Activated naive CD4-positive, alpha-beta T cell treated with anti-CD3 and anti-CD28 coated beads for 36 hours (primary cell): ENCODE measurements at regions of chr5 and their contacts with region 1.

Region 1: DNA sequence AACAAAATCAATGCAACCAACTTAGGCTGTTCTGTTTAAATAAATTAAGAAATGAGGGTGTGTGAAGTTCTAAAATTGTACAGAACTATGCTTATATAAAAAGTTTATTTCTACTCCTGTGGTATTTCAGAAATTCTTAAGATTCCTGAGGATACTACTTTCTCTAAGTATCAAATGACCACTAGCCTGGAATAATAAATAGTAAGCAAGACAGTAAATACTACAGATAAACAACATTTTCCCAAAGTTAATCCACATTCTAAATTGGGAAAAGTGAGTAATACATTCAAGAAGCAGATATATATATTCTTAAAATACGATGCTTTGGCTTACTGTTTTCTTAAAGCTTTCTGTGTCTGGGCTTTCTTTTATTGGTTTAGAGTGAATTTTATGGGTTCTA is 29.5 kb downstream of the CCNH start:
- DNase-seq: no peak
- H3K4me3 Mint-ChIP-seq: no peak overlapping the region
- H3K27ac Mint-ChIP-seq: no peak overlapping the region
- H3K4me1 Mint-ChIP-seq: no peaks in the 10 kb centered on the region
- H3K27me3 Mint-ChIP-seq: no peaks in the 10 kb centered on the region

Region 2: DNA sequence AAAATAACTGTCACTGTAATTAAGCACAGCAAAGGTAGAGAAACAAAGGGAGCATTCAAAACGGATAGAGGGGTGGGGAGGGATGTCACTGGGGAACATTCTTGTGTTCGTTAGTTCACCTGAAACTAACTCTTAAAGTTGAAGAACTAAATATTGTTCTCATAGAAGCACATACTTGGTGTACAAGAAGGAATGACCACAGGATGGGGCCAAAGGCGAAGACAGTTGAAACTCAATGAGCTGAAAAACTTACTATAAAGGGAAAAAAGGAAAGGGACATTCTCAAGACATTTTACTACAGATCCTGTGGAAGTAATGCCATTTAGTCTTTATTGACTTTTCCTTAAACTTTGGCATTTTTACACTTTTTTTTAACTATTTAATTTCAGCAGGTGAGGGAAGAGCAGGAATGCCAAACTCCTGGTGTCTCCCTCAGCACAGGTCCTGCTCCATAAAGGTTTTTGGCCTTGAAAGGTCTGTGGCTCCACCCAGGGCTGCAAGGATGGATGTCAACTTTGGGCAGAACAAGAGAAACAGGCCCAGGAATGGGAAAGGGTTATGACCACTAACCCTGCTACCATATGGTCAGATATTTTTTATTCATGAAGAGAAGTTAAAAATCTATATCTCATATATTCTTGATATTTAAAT is 313.1 kb before region 1 on chr5:
- CTCF ChIA-PET with region 1: no interaction called
- intact Hi-C with region 1: loop called (anchors 5 kb)
- DNase-seq: peak; percentile 10
- H3K4me3 Mint-ChIP-seq: no peak overlapping the region
- H3K27ac Mint-ChIP-seq: no peak overlapping the region
- H3K4me1 Mint-ChIP-seq: peaks cover 14% of the 10 kb centered on the region
- H3K27me3 Mint-ChIP-seq: no peaks in the 10 kb centered on the region

Region 3: GRCh38 chr5:87327998-87328397 is 55.2 kb before region 1 on chr5:
- CTCF ChIA-PET with region 1: no interaction called
- intact Hi-C with region 1: no loop called
- DNase-seq: no peak
- H3K4me3 Mint-ChIP-seq: no peak overlapping the region
- H3K27ac Mint-ChIP-seq: no peak overlapping the region
- H3K4me1 Mint-ChIP-seq: peaks cover 57% of the 10 kb centered on the region
- H3K27me3 Mint-ChIP-seq: no peaks in the 10 kb centered on the region